Activated T-helper 1 cell treated with anti-CD3 and anti-CD28 coated beads, Interleukin-12 subunit alpha, Interleukin-12 subunit beta, Interleukin-2, Interleukin-4 antibody, amounts not matched to agents 30 ng/mL and 10 ng/mL and 1 ng/mL, durations not matched to agents 14 hours and 24 hours and 36 hours (primary cell): ENCODE measurements at regions of chr2 and their contacts with region 1.

Region 1: DNA sequence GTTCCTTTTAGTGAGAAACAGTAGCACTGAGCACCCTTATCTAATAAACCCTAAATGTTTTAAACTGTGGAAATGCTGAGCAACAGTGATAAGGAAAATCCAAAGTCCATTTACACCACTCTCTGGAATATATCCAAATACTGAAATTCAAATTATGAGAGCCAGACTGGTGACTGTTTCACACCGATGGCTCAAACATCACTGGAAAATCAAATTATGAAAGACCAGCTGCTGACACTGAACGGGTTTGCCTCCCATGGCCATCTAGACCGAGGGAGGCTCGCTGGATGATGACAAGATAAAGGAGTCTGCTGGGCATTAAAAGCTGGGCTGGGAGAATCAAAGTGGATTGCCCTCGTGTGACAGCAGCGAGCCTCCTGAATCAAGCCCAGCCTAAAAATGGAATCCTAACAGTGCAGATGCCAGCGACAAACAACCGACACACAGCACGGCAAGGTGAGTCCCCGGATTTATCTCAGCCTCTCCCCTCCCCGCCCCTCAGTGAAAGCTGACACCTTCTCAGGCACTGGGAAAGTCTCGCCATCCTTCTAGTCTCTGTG is 30.3 kb downstream of the SERPINE2 start:
- DNase-seq: no peak
- H3K4me3 Mint-ChIP-seq: no peak overlapping the region
- H3K27ac Mint-ChIP-seq: no peak overlapping the region
- H3K4me1 Mint-ChIP-seq: peaks cover 16% of the 10 kb centered on the region
- H3K27me3 Mint-ChIP-seq: no peaks in the 10 kb centered on the region

Region 2: GRCh38 chr2:223800908-223801307 is 207.9 kb before region 1 on chr2:
- intact Hi-C with region 1: no loop called
- DNase-seq: no peak
- H3K4me3 Mint-ChIP-seq: no peak overlapping the region
- H3K27ac Mint-ChIP-seq: no peak overlapping the region
- H3K4me1 Mint-ChIP-seq: peaks cover 6% of the 10 kb centered on the region
- H3K27me3 Mint-ChIP-seq: no peaks in the 10 kb centered on the region

Region 3: DNA sequence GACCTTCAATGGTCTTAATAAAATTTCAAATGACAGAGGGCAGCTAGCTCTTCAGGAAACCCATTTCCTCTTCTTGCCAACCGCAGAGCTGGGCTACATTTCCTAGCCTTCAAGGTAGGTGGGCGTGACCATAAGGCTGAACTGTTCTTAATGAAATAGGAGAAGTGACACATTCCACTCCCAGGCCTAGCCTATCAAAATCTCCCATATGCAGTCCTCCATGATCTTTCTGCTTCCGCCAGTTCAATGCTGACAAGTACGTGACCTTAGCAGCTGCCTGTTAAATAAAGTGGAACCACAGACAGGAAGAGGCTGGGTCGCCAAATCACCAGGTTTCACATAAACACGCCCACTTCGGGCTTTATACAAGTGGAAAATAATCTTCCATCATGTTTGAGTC is 17.1 kb after region 1 on chr2:
- intact Hi-C with region 1: loop called (anchors 1 kb)
- DNase-seq: peak; percentile 65
- H3K4me3 Mint-ChIP-seq: peak overlapping the region; percentile 51
- H3K27ac Mint-ChIP-seq: peak overlapping the region; percentile 87
- H3K4me1 Mint-ChIP-seq: peaks cover 77% of the 10 kb centered on the region
- H3K27me3 Mint-ChIP-seq: no peaks in the 10 kb centered on the region